Activated CD4-positive, alpha-beta memory T cell treated with anti-CD3 and anti-CD28 coated beads for 36 hours (primary cell): ENCODE measurements at regions of chr1 and their contacts with region 1.

Region 1: DNA sequence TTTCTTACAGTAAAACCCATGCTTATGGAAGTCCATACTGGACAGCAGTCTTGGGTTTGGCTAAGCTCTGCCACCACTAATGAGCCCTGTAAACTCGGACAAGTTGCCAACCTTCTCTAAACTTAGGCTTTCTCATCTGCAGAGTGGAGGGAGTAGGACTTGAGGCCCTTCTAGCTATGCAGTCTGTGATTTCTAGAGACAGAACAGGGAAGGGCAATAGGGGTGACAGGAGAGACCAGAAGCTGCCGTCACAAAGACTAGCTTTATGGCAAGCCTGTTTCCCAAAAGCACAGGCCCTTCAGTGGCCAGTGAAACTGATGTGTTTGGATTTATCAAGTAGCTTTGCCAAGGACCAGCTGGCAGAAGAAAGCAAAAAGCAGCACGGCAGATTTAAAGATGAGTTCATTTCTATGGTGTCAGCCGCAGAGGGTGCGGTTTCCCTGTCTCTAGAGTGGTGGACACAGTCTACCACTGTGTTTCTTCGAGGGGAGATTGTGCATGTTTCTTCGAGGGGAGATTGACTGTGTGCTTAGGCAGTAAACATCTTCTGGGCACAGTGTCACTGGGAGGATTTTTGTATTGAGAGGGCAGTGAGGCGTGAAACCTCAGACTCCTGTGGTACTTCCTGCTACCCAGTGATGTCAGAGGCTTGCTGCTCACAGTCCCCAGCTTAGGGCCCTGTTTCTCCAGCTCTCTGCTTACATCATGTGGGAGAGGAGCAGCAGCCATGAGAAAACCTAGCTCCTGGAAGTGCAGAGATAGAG is 119.0 kb downstream of the ROR1 start:
- DNase-seq: no peak
- H3K4me3 Mint-ChIP-seq: no peak overlapping the region
- H3K27ac Mint-ChIP-seq: no peak overlapping the region
- H3K4me1 Mint-ChIP-seq: no peaks in the 10 kb centered on the region
- H3K27me3 Mint-ChIP-seq: peaks cover 5% of the 10 kb centered on the region

Region 2: GRCh38 chr1:63946866-63947491 is 54.2 kb after region 1 on chr1:
- CTCF ChIA-PET with region 1: no interaction called
- POLR2A ChIA-PET with region 1: no interaction called
- intact Hi-C with region 1: loop called (anchors 10 kb)
- DNase-seq: no peak
- H3K4me3 Mint-ChIP-seq: no peak overlapping the region
- H3K27ac Mint-ChIP-seq: no peak overlapping the region
- H3K4me1 Mint-ChIP-seq: no peaks in the 10 kb centered on the region
- H3K27me3 Mint-ChIP-seq: peaks cover 4% of the 10 kb centered on the region